HepG2 (cell line): ENCODE measurements at regions of chr15 and their contacts with region 1.

Region 1: DNA sequence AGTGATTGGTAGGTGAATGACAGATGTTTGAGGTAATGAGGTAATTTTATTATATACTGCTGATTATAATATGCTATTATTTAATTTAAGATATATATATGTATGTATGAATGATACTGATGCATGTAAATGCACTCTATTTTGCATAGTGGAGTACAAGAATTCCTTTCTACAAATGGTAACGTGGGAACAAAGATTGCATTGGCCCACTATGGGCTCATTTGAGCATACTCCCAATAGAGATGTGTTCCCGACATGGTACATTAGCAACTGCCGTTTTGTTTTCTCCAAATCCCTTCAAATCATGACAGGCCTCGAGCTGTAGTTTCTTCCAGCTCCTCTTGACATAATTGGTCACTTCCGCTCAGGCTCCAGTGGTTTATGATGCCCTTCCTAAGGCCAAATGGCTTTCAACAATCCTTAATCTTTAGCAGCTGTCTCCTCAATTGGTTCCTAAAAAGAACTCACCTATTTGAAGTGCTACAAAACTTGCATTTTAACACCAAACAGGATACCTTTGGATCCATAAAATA is 266.1 kb downstream of the ADAMTSL3 start:
- DNase-seq: no peak
- ATAC-seq: no peak
- H3K4me3 ChIP-seq: no peak overlapping the region
- H3K27ac ChIP-seq: no peak overlapping the region
- H3K4me1 ChIP-seq: no peaks in the 10 kb centered on the region
- H3K27me3 ChIP-seq: 0 out of 5 replicates have a peak, but pooled peaks cover 0 to under 1% of the 10 kb centered on the region in 2 experiments
- CTCF ChIP-seq: no peak
- EP300 ChIP-seq: no peak
- POLR2A ChIP-seq: no peak
- RAD21 ChIP-seq: no peak

Region 2: GRCh38 chr15:83930392-83931205 is 10.6 kb after region 1 on chr15:
- CTCF ChIA-PET with region 1: no interaction called
- POLR2A ChIA-PET with region 1: no interaction called
- in situ Hi-C with region 1: no loop called
- intact Hi-C with region 1: loop called (anchors 1 kb)
- DNase-seq: peak; percentile 78
- ATAC-seq: peak; percentile 99
- H3K4me3 ChIP-seq: no peak overlapping the region
- H3K27ac ChIP-seq: peak overlapping the region; percentile 49
- H3K4me1 ChIP-seq: peaks cover 30% of the 10 kb centered on the region
- H3K27me3 ChIP-seq: no peaks in the 10 kb centered on the region; a peak in 1 of 5 replicates
- CTCF ChIP-seq: no peak
- EP300 ChIP-seq: peak in 1 of 2 experiments; percentile 40; a peak in 1 of 4 replicates
- POLR2A ChIP-seq: no peak
- RAD21 ChIP-seq: no peak